Uterus (tissue), 4 donors: ENCODE measurements at regions of chr16 and their contacts with region 1.

Region 1: GRCh38 chr16:19907161-19907992 is 22.7 kb upstream of the GPRC5B start:
- DNase-seq: peak; percentile 59 to 60
- H3K4me3 ChIP-seq: no peak overlapping the region
- H3K27ac ChIP-seq: no peak overlapping the region
- H3K4me1 ChIP-seq: no peaks in the 10 kb centered on the region
- H3K27me3 ChIP-seq: no peaks in the 10 kb centered on the region
- CTCF ChIP-seq: peak; percentile 81 to 89 (median 87)
- POLR2A ChIP-seq: no peak

Region 2: DNA sequence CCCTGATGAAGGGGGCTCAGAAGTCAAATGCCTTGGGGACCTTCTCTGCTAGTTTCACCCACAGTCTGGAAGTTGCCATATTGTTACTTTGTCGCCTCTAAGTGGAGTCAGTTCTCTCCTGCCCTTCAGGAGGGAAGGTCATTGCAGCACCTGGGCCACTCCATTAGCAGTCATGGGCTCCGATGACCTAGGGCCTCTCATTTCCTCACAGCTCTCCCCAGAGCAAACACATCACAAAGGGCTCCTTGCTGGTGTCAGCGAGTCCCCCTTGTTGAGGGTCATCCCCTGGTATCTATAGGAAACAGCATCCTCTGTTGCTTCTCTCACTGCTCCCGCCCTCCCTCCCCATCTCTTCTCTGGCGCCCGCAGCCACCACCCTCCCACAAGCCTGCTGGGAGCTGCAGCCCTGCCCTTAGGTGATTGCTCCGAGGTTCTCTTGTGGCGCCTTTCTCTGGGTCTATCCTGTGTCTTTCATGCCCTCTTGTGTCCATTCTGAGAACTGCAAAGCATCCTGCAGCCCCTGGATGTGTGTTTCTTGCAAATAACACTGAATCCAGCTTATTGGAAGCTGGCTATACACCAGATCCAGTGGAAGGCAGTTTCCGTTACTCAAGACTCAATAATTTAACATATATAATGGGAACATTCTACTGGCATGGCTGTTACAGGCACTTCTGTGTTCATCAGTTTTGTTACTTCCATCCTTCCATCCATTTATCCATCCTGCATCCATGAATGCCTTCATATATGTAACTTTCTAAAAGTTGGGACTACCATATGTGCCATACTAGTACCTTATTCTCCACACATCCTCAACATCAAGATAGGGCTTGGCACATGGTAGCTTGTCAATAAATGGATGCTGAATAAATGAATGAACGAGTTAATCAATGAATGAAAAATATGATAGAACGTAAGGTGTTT is 476.0 kb after region 1 on chr16:
- intact Hi-C with region 1: loop called (anchors 10 kb)
- DNase-seq: peak; percentile 45 to 67
- H3K4me3 ChIP-seq: no peak overlapping the region
- H3K27ac ChIP-seq: no peak overlapping the region
- H3K4me1 ChIP-seq: no peaks in the 10 kb centered on the region
- H3K27me3 ChIP-seq: no peaks in the 10 kb centered on the region
- CTCF ChIP-seq: peak; percentile 74 to 80 (median 76)
- POLR2A ChIP-seq: no peak